Posterior cingulate gyrus (tissue), 11 donors: ENCODE measurements at regions of chr10 and their contacts with region 1.

Region 1: DNA sequence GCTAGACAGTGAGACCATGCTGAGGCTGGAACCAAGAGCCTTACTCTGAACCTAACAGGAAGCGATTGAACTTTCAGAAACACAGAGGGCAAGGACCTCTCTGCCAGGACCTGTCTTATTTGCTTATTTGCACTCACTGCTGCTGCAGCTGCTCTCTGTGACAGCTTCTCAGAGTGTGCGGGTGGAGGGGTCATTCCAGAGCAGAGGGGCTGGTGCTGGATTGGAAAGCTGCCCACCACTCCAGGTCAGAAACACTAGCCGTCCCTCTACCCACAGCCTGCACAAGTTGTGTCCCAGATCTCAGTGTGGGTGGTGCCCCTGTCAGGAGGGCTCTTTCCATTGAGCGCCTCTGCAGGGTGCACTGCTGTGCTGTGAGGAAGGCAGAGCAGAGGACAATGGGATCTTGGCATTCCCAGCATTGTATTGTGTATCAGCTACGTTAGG is 126.2 kb downstream of the CCNY start:
- DNase-seq: peak in 2 of 10 donors; percentile 65 to 86

Region 2: DNA sequence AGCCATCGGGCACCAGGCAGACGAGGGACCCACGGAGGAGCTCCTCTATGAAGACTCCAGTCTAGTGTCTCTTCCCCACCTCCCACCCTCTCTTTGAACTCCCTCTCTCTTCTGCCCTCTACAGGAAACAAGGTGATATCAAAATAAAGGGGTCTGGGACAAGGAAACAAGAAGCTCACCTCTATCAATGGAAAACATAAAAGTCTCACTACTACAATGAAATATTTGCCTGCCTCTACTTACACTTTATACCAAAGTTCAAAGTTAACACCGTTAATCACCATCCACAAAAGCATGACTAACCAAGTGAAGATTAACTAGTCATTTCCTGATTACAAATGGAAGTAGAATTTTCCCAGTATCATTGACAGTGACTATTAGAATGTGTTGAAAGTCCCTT is 729.6 kb before region 1 on chr10:
- intact Hi-C with region 1: no loop called
- DNase-seq: no peak

Region 3: GRCh38 chr10:35563261-35563891 is 100.9 kb after region 1 on chr10:
- intact Hi-C with region 1: loop called (anchors 5 kb)
- DNase-seq: peak in 7 of 10 donors; percentile 42 to 91 (median 54)